HEK293T (cell line): ENCODE measurements at regions of chr1 and their contacts with region 1.

Region 1: GRCh38 chr1:184051485-184052193 is at the start of gene TSEN15:
- DNase-seq: peak; percentile 88

Region 2: DNA sequence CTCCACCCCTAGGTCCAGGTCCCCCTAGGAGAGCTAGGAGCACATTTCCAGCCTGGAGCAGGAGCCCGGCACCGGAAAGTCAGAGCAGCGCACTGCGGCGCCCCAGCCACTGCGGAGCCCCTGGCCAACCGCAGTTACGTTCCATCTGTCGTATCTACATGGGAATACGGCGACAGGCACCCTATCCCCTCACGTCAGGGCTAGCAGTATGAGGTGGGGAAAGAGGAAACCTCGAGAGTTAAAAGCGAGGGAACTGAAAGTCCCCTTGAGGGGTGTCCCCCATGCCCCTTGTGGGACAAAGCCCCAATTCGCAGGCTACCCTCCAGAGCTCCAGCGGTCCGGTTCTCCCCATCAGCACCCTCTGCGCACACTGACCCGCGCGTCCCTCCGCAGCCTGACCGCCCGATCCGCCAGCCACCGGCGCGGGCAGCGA is 15.1 kb before region 1 on chr1:
- CTCF ChIA-PET with region 1: no interaction called
- POLR2A ChIA-PET with region 1: interaction called, 45 read pairs
- DNase-seq: peak; percentile 57

Region 3: DNA sequence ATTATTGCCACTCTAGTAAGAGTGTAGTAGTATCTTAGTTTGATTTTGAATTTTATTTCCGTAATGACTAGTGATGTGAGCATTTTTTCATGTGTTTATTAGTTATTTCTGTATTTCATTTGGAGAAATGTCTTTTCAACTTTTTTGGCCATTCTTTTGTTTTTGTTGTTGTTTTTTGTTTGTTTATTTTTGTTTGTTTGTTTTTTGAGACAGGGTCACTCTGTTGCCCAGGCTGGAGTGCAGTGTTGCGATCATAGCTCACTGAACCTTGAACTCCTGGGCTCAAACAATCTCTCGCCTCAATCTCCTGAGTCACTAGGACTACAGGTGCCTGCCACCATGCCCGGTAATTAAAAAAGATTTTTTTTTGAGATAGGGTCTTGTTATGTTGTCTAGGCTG is 75.9 kb after region 1 on chr1:
- CTCF ChIA-PET with region 1: no interaction called
- POLR2A ChIA-PET with region 1: no interaction called
- DNase-seq: no peak